AG04450 (cell line): ENCODE measurements at regions of chr4 and their contacts with region 1.

Region 1: GRCh38 chr4:86831262-86832130 is 17.7 kb downstream of the SLC10A6 start:
- DNase-seq: peak; percentile 93
- H3K4me3 ChIP-seq: no peak overlapping the region
- H3K27ac ChIP-seq: peak overlapping the region; percentile 91
- H3K27me3 ChIP-seq: no peaks in the 10 kb centered on the region
- CTCF ChIP-seq: no peak

Region 2: DNA sequence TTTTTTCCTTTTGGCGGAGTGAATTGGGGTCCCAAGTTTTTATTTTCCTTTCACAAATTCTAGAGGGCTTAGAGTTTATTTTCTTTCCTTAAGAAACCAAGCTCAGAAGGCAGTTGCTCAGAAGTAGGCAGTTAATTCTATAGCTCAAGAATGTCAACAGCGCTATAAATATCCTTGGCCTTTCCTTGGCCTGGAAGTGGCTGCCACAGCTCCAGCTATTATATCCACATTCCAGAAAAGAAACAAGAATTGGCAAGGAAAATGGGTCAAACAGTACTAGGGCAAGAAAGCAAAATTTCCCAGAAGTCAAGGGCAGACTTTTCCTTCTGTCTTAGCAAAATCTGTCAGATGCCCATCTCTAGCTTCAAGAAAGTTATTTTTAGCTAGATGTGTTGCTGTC is 13.3 kb before region 1 on chr4:
- CTCF ChIA-PET with region 1: interaction called, 3 read pairs
- POLR2A ChIA-PET with region 1: interaction called, 12 read pairs
- DNase-seq: no peak
- H3K4me3 ChIP-seq: no peak overlapping the region
- H3K27ac ChIP-seq: peak overlapping the region; percentile 41
- H3K27me3 ChIP-seq: no peaks in the 10 kb centered on the region
- CTCF ChIP-seq: no peak